PC-3 (cell line): ENCODE measurements at regions of chr18 and their contacts with region 1.

Region 1: DNA sequence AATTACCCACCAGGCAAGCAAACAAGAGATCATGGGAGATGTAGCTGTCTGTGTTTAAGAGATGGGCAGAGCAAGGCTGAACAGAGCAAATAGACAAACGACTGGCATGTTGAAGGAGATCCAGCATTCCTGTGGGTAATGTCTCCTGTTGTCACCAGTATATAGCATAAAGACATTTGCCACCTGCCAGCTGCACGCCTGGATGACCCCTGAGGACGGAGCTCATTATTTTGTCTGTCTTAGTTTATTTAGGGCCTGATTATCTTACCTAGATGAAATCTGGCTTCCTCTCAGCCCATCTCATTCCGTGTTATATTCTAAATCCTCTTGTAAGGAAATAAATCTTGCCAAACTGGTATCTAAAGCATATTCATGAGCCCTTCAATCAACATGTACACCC is 510.3 kb upstream of the LINC00305 start:
- DNase-seq: no peak
- ATAC-seq: no peak
- H3K4me3 ChIP-seq: no peak overlapping the region
- H3K27ac ChIP-seq: no peak overlapping the region
- H3K4me1 ChIP-seq: no peaks in the 10 kb centered on the region
- H3K27me3 ChIP-seq: no peaks in the 10 kb centered on the region
- CTCF ChIP-seq: no peak

Region 2: DNA sequence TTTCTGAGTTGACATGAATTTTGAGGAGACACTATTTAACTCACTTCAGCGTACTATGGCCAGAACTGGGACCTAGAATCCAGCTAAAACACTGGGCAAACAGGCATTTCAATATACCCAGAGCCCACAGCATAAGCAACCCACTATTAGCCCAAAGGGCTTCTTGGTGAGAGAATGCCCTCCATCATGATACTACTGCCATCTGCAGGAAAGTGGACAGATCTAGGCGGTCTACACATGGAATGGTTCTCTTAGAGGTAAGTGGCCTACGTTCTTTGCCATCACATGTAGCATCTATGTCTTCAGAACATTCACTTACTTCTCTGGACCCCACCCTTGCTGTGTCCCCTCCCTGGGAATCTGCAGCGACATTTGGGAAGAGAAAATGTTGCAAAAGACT is 329.0 kb before region 1 on chr18:
- CTCF ChIA-PET with region 1: no interaction called
- POLR2A ChIA-PET with region 1: no interaction called
- intact Hi-C with region 1: no loop called
- DNase-seq: peak; percentile 18
- ATAC-seq: peak; percentile 62
- H3K4me3 ChIP-seq: no peak overlapping the region
- H3K27ac ChIP-seq: no peak overlapping the region
- H3K4me1 ChIP-seq: no peaks in the 10 kb centered on the region
- H3K27me3 ChIP-seq: peaks cover 44% of the 10 kb centered on the region
- CTCF ChIP-seq: peak; percentile 45; the same call in 1 of the 2 replicates

Region 3: GRCh38 chr18:65091744-65092329 is 432.6 kb after region 1 on chr18:
- CTCF ChIA-PET with region 1: no interaction called
- POLR2A ChIA-PET with region 1: no interaction called
- intact Hi-C with region 1: loop called (anchors 10 kb)
- DNase-seq: peak; percentile 69
- ATAC-seq: peak; percentile 58; the same call in 1 of the 2 replicates
- H3K4me3 ChIP-seq: no peak overlapping the region
- H3K27ac ChIP-seq: no peak overlapping the region
- H3K4me1 ChIP-seq: no peaks in the 10 kb centered on the region
- H3K27me3 ChIP-seq: no peaks in the 10 kb centered on the region
- CTCF ChIP-seq: peak; percentile 72

Region 4: GRCh38 chr18:65817178-65817577 is 1158.0 kb after region 1 on chr18:
- CTCF ChIA-PET with region 1: no interaction called
- POLR2A ChIA-PET with region 1: no interaction called
- intact Hi-C with region 1: no loop called
- DNase-seq: no peak
- ATAC-seq: no peak
- H3K4me3 ChIP-seq: no peak overlapping the region
- H3K27ac ChIP-seq: no peak overlapping the region
- H3K4me1 ChIP-seq: peaks cover 9% of the 10 kb centered on the region
- H3K27me3 ChIP-seq: no peaks in the 10 kb centered on the region
- CTCF ChIP-seq: no peak